ENCODE measurements at regions of chr12 and their contacts with region 1.

Region 1: DNA sequence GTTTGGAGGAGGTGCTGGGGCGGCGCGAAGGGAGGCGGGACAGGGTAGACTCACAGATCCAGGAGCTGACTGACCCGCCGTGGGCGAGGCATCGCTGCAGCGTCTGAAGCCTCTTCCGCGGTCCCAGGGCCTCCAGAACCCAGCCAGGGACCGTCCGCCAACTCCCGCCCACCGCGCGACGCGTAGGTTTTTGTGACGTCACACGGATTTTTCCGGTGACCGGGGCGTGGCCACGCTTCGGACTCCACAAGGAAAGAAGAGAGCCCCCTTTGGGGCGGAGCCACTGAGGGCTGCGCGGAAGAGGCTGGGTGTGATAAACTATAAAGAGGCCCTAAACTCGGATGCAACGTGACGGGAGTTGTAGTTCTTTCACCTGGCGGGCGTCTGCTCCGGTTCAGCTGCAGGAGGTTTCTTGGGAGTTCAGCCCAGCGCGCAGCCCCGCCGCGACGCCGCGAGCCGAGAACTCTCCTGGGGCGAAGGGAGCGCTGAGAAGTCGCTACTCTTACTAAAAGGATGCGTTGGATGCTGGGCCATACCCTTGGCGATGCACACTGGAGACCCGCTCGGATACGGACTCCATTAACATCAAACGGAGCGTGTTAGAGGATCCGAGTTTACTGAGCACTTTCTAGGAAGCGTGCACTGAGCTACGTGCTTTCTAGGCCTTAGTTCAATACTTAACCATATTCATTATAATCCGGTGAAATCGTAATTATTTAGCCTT is at the start of gene AMN1:
- DNase-seq: peak; percentile 85 to 100 (median 98)
- ATAC-seq: peak; percentile 89 to 91
- H3K4me3 Mint-ChIP-seq: peak within 1 kb of the TSS; percentile 95 to 100 (median 99)
- H3K27ac Mint-ChIP-seq: peak within 1 kb of the TSS; percentile 96 to 100 (median 99)
- H3K4me1 Mint-ChIP-seq: peaks cover 26 to 77% (median 59%) of the 10 kb centered on the region in 4 donors
- H3K27me3 Mint-ChIP-seq: no peaks in the 10 kb centered on the region
- polyA plus RNA-seq, gene AMN1: 8.9 to 16.7 (median 12.8) TPM

Region 2: DNA sequence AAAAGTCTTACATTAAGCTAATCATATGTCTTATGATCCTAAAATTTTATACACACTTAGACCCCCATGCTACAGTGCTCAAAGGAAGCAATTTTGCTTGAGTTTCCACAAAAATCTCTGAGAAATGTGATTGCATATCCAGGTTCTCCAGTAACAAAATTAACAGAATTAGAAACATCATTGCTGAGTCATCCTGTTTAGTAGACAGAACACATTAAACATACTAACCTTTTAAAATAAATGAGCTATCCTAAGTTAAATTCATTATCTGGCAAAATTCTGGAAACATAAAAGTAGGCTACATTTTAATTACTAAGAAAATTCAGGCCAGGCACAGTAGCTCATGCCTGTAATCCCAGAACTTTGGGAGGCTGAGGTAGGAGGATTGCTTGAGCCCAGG is 232.8 kb before region 1 on chr12:
- POLR2A ChIA-PET with region 1: no interaction called
- DNase-seq: no peak
- ATAC-seq: no peak
- H3K4me3 Mint-ChIP-seq: no peak overlapping the region
- H3K27ac Mint-ChIP-seq: no peak overlapping the region
- H3K4me1 Mint-ChIP-seq: peaks cover 0 to 6% (median 0%) of the 10 kb centered on the region in 4 donors
- H3K27me3 Mint-ChIP-seq: peaks cover 0 to 7% (median 3%) of the 10 kb centered on the region in 5 donors

Region 3: GRCh38 chr12:31659087-31659933 is 69.8 kb before region 1 on chr12 and contains the start of gene ETFBKMT:
- POLR2A ChIA-PET with region 1: interaction called, 17 read pairs
- DNase-seq: peak; percentile 85 to 96 (median 92)
- ATAC-seq: peak; percentile 97 to 99
- H3K4me3 Mint-ChIP-seq: peak within 1 kb of the TSS; percentile 88 to 99 (median 97)
- H3K27ac Mint-ChIP-seq: peak within 1 kb of the TSS; percentile 97 to 100 (median 99)
- H3K4me1 Mint-ChIP-seq: peaks cover 6 to 33% (median 13%) of the 10 kb centered on the region in 4 donors
- H3K27me3 Mint-ChIP-seq: no peaks in the 10 kb centered on the region
- polyA plus RNA-seq, gene ETFBKMT: 0.34 to 1.8 (median 0.62) TPM

Region 4: GRCh38 chr12:31742891-31743290 is 13.8 kb after region 1 on chr12:
- POLR2A ChIA-PET with region 1: interaction called, 11 read pairs
- DNase-seq: peak in 3 of 10 donors; percentile 29 to 41 (median 38)
- ATAC-seq: peak; percentile 57 to 62
- H3K4me3 Mint-ChIP-seq: peak overlapping the region in 9 of 10 donors; percentile 0 to 57 (median 17)
- H3K27ac Mint-ChIP-seq: peak overlapping the region in 8 of 10 donors; percentile 11 to 83 (median 63)
- H3K4me1 Mint-ChIP-seq: peaks cover 29 to 81% (median 66%) of the 10 kb centered on the region in 4 donors
- H3K27me3 Mint-ChIP-seq: no peaks in the 10 kb centered on the region

Region 5: GRCh38 chr12:31756977-31757420 is 27.9 kb after region 1 on chr12:
- POLR2A ChIA-PET with region 1: no interaction called
- DNase-seq: no peak
- ATAC-seq: no peak
- H3K4me3 Mint-ChIP-seq: no peak overlapping the region
- H3K27ac Mint-ChIP-seq: peak overlapping the region in 2 of 10 donors; percentile 38 to 72
- H3K4me1 Mint-ChIP-seq: peaks cover 15 to 29% (median 25%) of the 10 kb centered on the region in 4 donors
- H3K27me3 Mint-ChIP-seq: no peaks in the 10 kb centered on the region

Region 6: GRCh38 chr12:31783996-31784645 is 55.0 kb after region 1 on chr12:
- POLR2A ChIA-PET with region 1: interaction called, 10 read pairs
- DNase-seq: no peak
- ATAC-seq: no peak
- H3K4me3 Mint-ChIP-seq: no peak overlapping the region
- H3K27ac Mint-ChIP-seq: peak overlapping the region in 3 of 10 donors; percentile 16 to 63 (median 35)
- H3K4me1 Mint-ChIP-seq: peaks cover 7 to 30% (median 23%) of the 10 kb centered on the region in 4 donors
- H3K27me3 Mint-ChIP-seq: no peaks in the 10 kb centered on the region

Region 7: DNA sequence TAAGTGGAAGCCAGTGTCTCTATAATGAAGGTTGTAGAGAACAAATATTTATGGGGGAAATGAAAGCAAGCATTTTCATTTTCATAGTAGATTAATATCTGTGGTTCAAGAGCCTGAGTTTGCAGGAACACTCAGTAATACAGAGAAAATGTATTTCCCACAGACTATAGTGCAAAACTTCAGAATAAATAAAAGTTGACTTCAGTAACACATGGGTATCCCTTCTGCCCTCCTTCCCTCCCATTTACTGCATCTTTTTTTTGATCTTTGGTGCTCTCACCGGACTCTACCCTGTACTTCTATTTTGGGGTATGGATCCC is 75.1 kb after region 1 on chr12:
- POLR2A ChIA-PET with region 1: interaction called, 11 read pairs
- DNase-seq: no peak
- ATAC-seq: peak in 1 of 2 donors; percentile 28
- H3K4me3 Mint-ChIP-seq: peak overlapping the region; percentile 85 to 100 (median 94)
- H3K27ac Mint-ChIP-seq: peak overlapping the region; percentile 91 to 99 (median 95)
- H3K4me1 Mint-ChIP-seq: peaks cover 28 to 64% (median 58%) of the 10 kb centered on the region in 4 donors
- H3K27me3 Mint-ChIP-seq: no peaks in the 10 kb centered on the region

Region 8: GRCh38 chr12:31890295-31891285 is 161.5 kb after region 1 on chr12:
- POLR2A ChIA-PET with region 1: interaction called, 28 read pairs
- DNase-seq: peak in 3 of 10 donors; percentile 64 to 76 (median 72)
- ATAC-seq: peak; percentile 77 to 98
- H3K4me3 Mint-ChIP-seq: peak overlapping the region in 9 of 10 donors; percentile 57 to 81 (median 72)
- H3K27ac Mint-ChIP-seq: peak overlapping the region; percentile 51 to 96 (median 91)
- H3K4me1 Mint-ChIP-seq: peaks cover 17 to 81% (median 58%) of the 10 kb centered on the region in 4 donors
- H3K27me3 Mint-ChIP-seq: no peaks in the 10 kb centered on the region

Measured in naive thymus-derived CD8-positive, alpha-beta T cell (primary cell).